HepG2 (cell line): ENCODE measurements at regions of chr9 and their contacts with region 1.

Region 1: DNA sequence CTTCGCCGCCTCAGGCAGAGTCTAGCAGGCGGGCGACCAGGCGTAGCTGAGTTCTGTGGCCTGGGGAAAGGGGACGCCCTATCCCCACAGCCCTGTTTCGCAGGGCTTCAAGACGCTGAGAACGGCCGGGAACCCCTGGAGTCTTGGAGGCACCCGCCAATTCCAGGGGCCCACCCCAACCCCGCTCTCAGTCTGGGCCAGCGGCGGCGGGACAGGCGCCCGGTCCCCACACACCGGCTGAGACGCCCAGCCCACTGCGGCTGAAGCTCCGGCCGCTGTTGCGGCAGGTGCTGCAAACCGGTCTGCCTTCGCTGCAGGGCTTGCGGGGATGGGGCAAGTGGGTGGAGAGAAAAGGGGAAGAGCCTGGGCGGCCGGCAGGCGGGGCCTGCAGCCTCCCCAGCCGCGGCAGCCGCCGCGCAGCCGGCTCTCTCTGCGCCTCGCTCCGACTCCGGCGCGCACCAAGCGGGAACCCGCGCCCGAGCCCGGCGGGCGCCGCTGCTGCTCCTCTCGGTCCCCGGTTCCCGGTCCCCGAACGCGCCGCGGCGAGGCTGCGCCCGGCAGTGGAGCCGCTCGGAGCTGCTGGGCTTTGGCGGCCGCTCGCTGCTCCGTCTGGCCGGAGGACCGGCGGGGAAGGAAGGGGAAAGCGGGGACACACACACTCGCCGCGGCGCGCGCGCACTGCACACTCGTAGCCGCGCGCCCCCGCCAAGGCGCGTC is at the start of gene PIP5K1B:
- DNase-seq: peak; percentile 70
- ATAC-seq: peak; percentile 89
- H3K4me3 ChIP-seq: peak within 1 kb of the TSS; percentile 87 to 89 (median 88)
- H3K27ac ChIP-seq: peak within 1 kb of the TSS; percentile 83
- H3K4me1 ChIP-seq: peaks cover 62% of the 10 kb centered on the region
- H3K27me3 ChIP-seq: no peaks in the 10 kb centered on the region; a peak in 1 of 5 replicates
- CTCF ChIP-seq: peak; percentile 57
- EP300 ChIP-seq: no peak
- POLR2A ChIP-seq: peak; percentile 33 to 40; a peak in 2 of 4 replicates
- RAD21 ChIP-seq: peak; percentile 81
- total RNA-seq, gene PIP5K1B: 15.8 and 20.9 TPM in 2 replicates

Region 2: GRCh38 chr9:68584189-68585033 is 120.6 kb before region 1 on chr9:
- CTCF ChIA-PET with region 1: interaction called, 13 read pairs
- POLR2A ChIA-PET with region 1: no interaction called
- in situ Hi-C with region 1: no loop called
- intact Hi-C with region 1: loop called (anchors 1 kb)
- DNase-seq: peak; percentile 79
- ATAC-seq: peak; percentile 99
- H3K4me3 ChIP-seq: no peak overlapping the region
- H3K27ac ChIP-seq: no peak overlapping the region
- H3K4me1 ChIP-seq: no peaks in the 10 kb centered on the region
- H3K27me3 ChIP-seq: no peaks in the 10 kb centered on the region; a peak in 1 of 5 replicates
- CTCF ChIP-seq: peak; percentile 98
- EP300 ChIP-seq: no peak
- POLR2A ChIP-seq: no peak
- RAD21 ChIP-seq: peak; percentile 94

Region 3: DNA sequence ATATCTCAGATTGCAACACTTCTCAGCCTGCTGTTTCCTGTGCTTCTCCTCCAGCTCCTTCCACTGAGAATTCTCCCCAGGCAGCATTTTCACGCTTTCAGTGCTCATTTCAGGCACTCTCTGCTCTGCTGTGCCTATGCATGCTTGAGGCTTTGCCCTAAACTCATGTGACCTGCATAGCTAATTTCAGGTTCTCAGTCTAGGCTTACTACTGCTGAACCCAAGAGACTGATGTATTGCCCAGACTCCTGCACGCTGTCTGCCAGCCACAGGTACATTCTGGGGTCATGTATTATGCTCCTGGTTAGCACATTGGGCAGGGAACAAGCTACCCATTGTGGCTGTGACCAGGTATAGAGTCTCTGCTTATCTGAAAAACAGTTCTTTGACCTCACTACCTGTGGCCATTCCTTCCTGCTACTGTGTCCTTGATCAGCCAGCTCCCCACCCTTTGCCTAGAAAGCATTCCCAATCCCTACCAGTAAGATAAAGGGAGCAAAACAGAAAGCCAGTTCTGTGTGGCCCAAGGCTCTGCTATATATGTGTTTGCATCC is 34.7 kb after region 1 on chr9:
- CTCF ChIA-PET with region 1: no interaction called
- POLR2A ChIA-PET with region 1: interaction called, 24 read pairs
- in situ Hi-C with region 1: no loop called
- intact Hi-C with region 1: no loop called
- DNase-seq: peak; percentile 94
- ATAC-seq: peak; percentile 97
- H3K4me3 ChIP-seq: peak overlapping the region in 2 of 3 experiments; percentile 39 to 48; a peak in 4 of 6 replicates
- H3K27ac ChIP-seq: peak overlapping the region; percentile 81
- H3K4me1 ChIP-seq: peaks cover 75% of the 10 kb centered on the region
- H3K27me3 ChIP-seq: no peaks in the 10 kb centered on the region
- CTCF ChIP-seq: no peak
- EP300 ChIP-seq: peak in 1 of 2 experiments; percentile 84; a peak in 2 of 4 replicates
- POLR2A ChIP-seq: no peak
- RAD21 ChIP-seq: no peak

Region 4: GRCh38 chr9:68825762-68826472 is 120.9 kb after region 1 on chr9:
- CTCF ChIA-PET with region 1: no interaction called
- POLR2A ChIA-PET with region 1: no interaction called
- in situ Hi-C with region 1: no loop called
- intact Hi-C with region 1: no loop called
- DNase-seq: no peak
- ATAC-seq: no peak
- H3K4me3 ChIP-seq: no peak overlapping the region
- H3K27ac ChIP-seq: no peak overlapping the region
- H3K4me1 ChIP-seq: no peaks in the 10 kb centered on the region
- H3K27me3 ChIP-seq: no peaks in the 10 kb centered on the region
- CTCF ChIP-seq: no peak
- EP300 ChIP-seq: no peak
- POLR2A ChIP-seq: no peak
- RAD21 ChIP-seq: no peak

Region 5: DNA sequence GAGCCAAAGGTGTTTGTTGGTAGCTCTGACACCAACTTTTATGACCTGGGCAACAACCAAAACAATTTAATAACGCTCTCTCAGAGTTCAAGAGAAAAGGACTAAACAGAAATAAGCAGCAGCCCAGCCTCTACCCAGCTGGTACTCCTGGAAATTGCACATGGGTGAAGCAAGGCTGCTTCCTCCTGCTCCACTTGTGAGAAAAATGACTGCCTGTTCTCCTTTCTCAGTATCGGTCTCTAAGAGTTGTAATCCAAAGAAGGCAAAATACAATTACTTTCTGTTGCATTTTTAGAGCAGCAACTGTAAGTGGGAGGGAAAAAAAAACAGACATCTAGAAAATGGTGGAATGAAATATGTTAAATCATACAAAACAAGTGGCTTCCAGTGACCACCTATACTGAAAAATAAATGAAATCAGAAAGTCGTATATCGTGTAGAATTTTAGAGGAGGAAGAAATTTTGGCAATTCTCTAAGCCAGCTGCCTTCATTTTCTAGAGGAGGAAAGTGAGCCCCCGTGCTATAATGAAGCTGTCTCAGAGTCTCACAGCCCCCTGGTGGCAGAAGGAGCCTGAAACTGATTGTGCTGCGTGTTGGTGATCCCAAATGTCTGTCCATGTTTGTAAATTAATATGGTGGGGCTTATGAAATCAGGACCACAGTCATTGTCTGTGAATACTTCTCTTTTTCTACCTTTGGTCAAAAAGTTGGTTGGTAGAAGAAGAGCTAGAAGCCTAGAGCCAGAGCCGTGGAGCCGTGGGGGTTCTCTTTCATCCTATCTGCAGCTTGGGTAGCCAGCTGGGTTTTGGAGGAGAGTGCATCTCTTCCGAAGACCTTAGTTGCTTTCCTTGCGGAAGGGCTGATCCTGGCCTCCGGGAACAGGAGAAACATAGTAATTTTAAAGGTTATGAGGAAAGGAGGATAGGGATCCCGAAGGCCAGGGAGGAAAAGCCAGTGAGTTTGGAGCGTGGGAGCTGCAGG is 139.9 kb after region 1 on chr9:
- CTCF ChIA-PET with region 1: interaction called, 3 read pairs
- POLR2A ChIA-PET with region 1: no interaction called
- in situ Hi-C with region 1: loop called (anchors 10 kb)
- intact Hi-C with region 1: loop called (anchors 1 kb)
- DNase-seq: peak; percentile 25
- ATAC-seq: peak; percentile 78
- H3K4me3 ChIP-seq: no peak overlapping the region
- H3K27ac ChIP-seq: no peak overlapping the region
- H3K4me1 ChIP-seq: no peaks in the 10 kb centered on the region
- H3K27me3 ChIP-seq: no peaks in the 10 kb centered on the region
- CTCF ChIP-seq: peak; percentile 55
- EP300 ChIP-seq: no peak
- POLR2A ChIP-seq: no peak
- RAD21 ChIP-seq: no peak

Region 6: GRCh38 chr9:69027355-69028096 is 322.6 kb after region 1 on chr9:
- CTCF ChIA-PET with region 1: no interaction called
- POLR2A ChIA-PET with region 1: no interaction called
- in situ Hi-C with region 1: no loop called
- intact Hi-C with region 1: loop called (anchors 10 kb)
- DNase-seq: peak; percentile 54
- ATAC-seq: peak; percentile 87
- H3K4me3 ChIP-seq: no peak overlapping the region
- H3K27ac ChIP-seq: no peak overlapping the region
- H3K4me1 ChIP-seq: peaks cover 19% of the 10 kb centered on the region
- H3K27me3 ChIP-seq: no peaks in the 10 kb centered on the region
- CTCF ChIP-seq: peak; percentile 83
- EP300 ChIP-seq: no peak
- POLR2A ChIP-seq: no peak
- RAD21 ChIP-seq: peak; percentile 38; the same call in 1 of the 2 replicates